Common myeloid progenitor, CD34-positive (primary cell): ENCODE measurements at regions of chr17 and their contacts with region 1.

Region 1: GRCh38 chr17:82205719-82206508 is 6.7 kb downstream of the CCDC57 start:
- DNase-seq: peak; percentile 83 to 88 (median 87)
- H3K4me3 ChIP-seq: peak overlapping the region in 3 of 7 experiments; percentile 35 to 54 (median 42)
- H3K27ac ChIP-seq: peak overlapping the region in 1 of 2 experiments; percentile 63
- H3K4me1 ChIP-seq: peaks cover 2 to 28% (median 17%) of the 10 kb centered on the region in 4 experiments
- H3K27me3 ChIP-seq: no peaks in the 10 kb centered on the region

Region 2: GRCh38 chr17:82216301-82217119 is 10.6 kb after region 1 on chr17:
- CTCF ChIA-PET with region 1: interaction called, 12 read pairs
- POLR2A ChIA-PET with region 1: interaction called, 3 read pairs
- DNase-seq: peak; percentile 81 to 93 (median 93)
- H3K4me3 ChIP-seq: peak overlapping the region in 2 of 7 experiments; percentile 38 to 47
- H3K27ac ChIP-seq: peak overlapping the region in 1 of 2 experiments; percentile 62
- H3K4me1 ChIP-seq: peaks cover 0 to 58% (median 40%) of the 10 kb centered on the region in 4 experiments
- H3K27me3 ChIP-seq: no peaks in the 10 kb centered on the region